Prostate gland (tissue), 2 donors: ENCODE measurements at regions of chr5 and their contacts with region 1.

Region 1: GRCh38 chr5:127492854-127493738 is 24.3 kb upstream of the PRRC1 start:
- DNase-seq: no peak
- H3K4me3 ChIP-seq: no peak overlapping the region
- H3K27ac ChIP-seq: no peak overlapping the region
- H3K4me1 ChIP-seq: no peaks in the 10 kb centered on the region
- H3K27me3 ChIP-seq: no peaks in the 10 kb centered on the region
- CTCF ChIP-seq: peak; percentile 55 to 87 (median 74)
- POLR2A ChIP-seq: no peak

Region 2: DNA sequence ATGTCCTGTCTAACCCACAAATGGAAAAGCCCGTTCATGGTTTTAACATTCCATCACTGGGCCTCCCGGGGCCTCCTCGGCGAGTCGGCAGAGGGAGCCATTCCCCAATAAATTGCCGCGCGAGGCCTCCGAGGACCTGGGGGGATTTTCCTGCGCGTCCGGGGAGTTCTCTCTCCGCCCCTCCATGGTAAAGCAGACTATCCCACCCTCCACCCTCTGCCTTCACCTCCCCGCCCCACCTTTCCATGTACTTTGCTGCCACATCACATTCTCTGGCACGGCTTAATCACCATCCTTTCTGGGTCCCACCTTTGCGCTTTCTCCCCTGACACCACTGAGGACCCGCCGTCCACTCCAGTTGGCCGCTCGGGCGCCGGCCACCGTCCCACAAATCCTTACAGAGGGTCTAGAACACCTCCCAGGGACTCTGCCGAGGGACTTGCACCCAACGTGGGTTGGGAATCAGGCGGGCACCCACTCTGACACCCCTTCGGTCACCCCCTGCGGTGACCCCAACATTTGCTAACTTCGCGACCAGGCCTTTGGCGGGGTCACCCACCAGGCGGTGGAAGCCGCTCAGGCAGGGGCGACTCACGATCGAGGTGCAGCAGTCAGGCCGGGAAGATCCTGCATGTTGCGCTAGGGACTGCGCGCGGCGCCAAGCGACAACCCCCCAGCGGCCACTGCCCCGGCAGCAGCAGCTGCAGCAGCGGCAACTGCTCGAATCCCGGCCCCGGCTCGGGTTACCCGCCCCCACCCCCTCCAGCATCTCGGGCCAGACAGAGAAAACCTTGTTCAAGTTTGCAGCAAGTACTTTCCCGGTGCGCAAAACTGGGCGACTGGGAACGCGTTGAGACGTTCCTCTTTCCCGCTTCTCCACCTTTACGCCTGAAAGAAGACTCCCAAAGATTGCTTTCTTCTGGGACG is 202.8 kb before region 1 on chr5 and contains the start of gene MEGF10:
- intact Hi-C with region 1: loop called (anchors 2 kb)
- DNase-seq: peak; percentile 36
- H3K4me3 ChIP-seq: peak within 1 kb of the TSS; percentile 11 to 21
- H3K27ac ChIP-seq: no peak within 1 kb of the TSS
- H3K4me1 ChIP-seq: no peaks in the 10 kb centered on the region
- H3K27me3 ChIP-seq: no peaks in the 10 kb centered on the region
- CTCF ChIP-seq: peak in 3 of 4 experiments; percentile 61 to 66 (median 64)
- POLR2A ChIP-seq: no peak
- total RNA-seq, gene MEGF10: 0.77 to 7.9 TPM